ENCODE measurements at regions of chr1 and their contacts with region 1.

Region 1: GRCh38 chr1:48572646-48573261 is 100.8 kb upstream of the SPATA6 start:
- DNase-seq: peak; percentile 4 to 60
- H3K4me3 ChIP-seq: no peak overlapping the region
- H3K4me1 ChIP-seq: no peaks in the 10 kb centered on the region
- H3K27me3 ChIP-seq: no peaks in the 10 kb centered on the region

Region 2: GRCh38 chr1:48817505-48818114 is 244.9 kb after region 1 on chr1:
- in situ Hi-C with region 1: loop called (anchors 25 kb)
- DNase-seq: peak; percentile 40 to 65
- H3K4me3 ChIP-seq: no peak overlapping the region
- H3K4me1 ChIP-seq: no peaks in the 10 kb centered on the region
- H3K27me3 ChIP-seq: no peaks in the 10 kb centered on the region

Region 3: GRCh38 chr1:50348449-50349241 is 1775.9 kb after region 1 on chr1:
- in situ Hi-C with region 1: loop called (anchors 10 kb)
- DNase-seq: peak; percentile 61 to 73
- H3K4me3 ChIP-seq: no peak overlapping the region
- H3K4me1 ChIP-seq: no peaks in the 10 kb centered on the region
- H3K27me3 ChIP-seq: no peaks in the 10 kb centered on the region